Panc1 (cell line): ENCODE measurements at regions of chr17 and their contacts with region 1.

Region 1: GRCh38 chr17:48636177-48637018 is 10.2 kb upstream of the HOXB9 start:
- DNase-seq: no peak
- ATAC-seq: peak; percentile 54
- H3K4me3 ChIP-seq: no peak overlapping the region
- H3K27ac ChIP-seq: no peak overlapping the region; the same call in 1 of the 2 replicates
- H3K4me1 ChIP-seq: peaks cover 33% of the 10 kb centered on the region
- H3K27me3 ChIP-seq: no peaks in the 10 kb centered on the region
- CTCF ChIP-seq: peak; percentile 93; the same call in 1 of the 2 replicates

Region 2: DNA sequence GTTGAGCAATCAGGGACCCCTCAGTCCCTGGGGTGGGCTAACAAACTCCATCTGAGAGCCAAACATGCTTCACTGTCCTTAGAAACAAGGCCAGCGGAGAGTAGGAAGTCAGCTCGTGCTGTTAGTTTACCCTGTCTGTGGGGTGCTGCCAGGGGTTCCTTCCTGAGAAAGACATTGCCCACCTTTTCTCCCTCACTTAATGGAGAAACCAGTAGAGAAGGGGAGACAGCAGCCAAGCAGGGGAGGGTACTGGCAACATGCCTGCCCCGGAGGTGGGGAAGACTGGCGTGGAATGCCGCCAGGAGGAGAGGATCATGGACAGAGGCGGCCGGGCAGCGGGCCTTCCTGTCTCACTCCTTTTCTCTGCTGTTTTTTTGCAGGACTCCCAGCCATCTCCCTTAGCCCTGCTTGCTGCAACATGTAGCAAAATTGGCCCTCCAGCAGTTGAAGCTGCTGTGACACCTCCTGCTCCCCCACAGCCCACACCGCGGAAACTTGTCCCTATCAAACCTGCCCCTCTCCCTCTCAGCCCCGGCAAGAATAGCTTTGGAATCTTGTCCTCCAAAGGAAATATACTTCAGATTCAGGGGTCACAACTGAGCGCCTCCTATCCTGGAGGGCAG is 720.5 kb before region 1 on chr17:
- CTCF ChIA-PET with region 1: interaction called, 10 read pairs
- POLR2A ChIA-PET with region 1: no interaction called
- in situ Hi-C with region 1: no loop called
- intact Hi-C with region 1: no loop called
- DNase-seq: no peak
- ATAC-seq: 0 out of 2 replicates have a peak, but pooled peaks have one; percentile 13
- H3K4me3 ChIP-seq: no peak overlapping the region
- H3K27ac ChIP-seq: no peak overlapping the region
- H3K4me1 ChIP-seq: no peaks in the 10 kb centered on the region; the same call in 1 of the 2 replicates
- H3K27me3 ChIP-seq: no peaks in the 10 kb centered on the region
- CTCF ChIP-seq: no peak

Region 3: DNA sequence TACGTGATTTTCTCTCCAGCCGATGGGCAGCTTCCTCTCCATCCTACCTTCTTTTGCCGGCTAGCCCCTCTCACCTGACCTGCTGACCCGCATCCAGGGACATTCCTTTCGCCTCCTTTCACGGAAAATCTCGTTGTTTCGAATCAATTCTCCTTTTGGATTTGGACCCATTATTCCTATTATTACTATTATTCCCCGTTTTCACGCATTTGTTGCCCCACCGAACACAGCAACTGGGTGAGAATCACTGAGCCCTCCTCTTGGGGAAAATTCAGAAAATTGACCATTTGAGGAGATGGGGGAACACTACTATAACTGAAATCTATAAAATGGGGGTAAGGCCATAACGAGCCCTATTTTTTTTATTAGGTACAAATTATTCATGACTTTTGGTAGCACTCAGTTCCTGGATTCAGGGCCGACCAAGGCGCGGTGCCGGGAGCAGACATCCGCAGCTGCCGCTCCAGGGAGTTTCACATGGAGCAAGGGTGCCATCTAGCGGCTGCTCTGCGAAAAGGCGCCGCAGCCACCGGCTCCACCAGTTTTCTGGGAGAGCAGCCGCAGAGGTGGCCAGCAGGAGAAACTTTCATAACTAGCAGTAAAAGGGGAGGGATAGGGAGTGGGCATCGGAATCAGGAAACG is 18.0 kb before region 1 on chr17:
- CTCF ChIA-PET with region 1: interaction called, 4 read pairs
- POLR2A ChIA-PET with region 1: interaction called, 26 read pairs
- in situ Hi-C with region 1: no loop called
- intact Hi-C with region 1: no loop called
- DNase-seq: no peak
- ATAC-seq: peak; percentile 60
- H3K4me3 ChIP-seq: peak overlapping the region; percentile 68 to 71
- H3K27ac ChIP-seq: peak overlapping the region; percentile 99
- H3K4me1 ChIP-seq: peaks cover 63% of the 10 kb centered on the region
- H3K27me3 ChIP-seq: no peaks in the 10 kb centered on the region
- CTCF ChIP-seq: peak; percentile 100

Region 4: GRCh38 chr17:48625495-48626244 is 10.7 kb before region 1 on chr17:
- CTCF ChIA-PET with region 1: interaction called, 4 read pairs
- POLR2A ChIA-PET with region 1: interaction called, 27 read pairs
- in situ Hi-C with region 1: no loop called
- intact Hi-C with region 1: no loop called
- DNase-seq: no peak
- ATAC-seq: peak; percentile 73
- H3K4me3 ChIP-seq: peak overlapping the region; percentile 78 to 93
- H3K27ac ChIP-seq: peak overlapping the region; percentile 95
- H3K4me1 ChIP-seq: peaks cover 60% of the 10 kb centered on the region
- H3K27me3 ChIP-seq: no peaks in the 10 kb centered on the region
- CTCF ChIP-seq: no peak

Region 5: DNA sequence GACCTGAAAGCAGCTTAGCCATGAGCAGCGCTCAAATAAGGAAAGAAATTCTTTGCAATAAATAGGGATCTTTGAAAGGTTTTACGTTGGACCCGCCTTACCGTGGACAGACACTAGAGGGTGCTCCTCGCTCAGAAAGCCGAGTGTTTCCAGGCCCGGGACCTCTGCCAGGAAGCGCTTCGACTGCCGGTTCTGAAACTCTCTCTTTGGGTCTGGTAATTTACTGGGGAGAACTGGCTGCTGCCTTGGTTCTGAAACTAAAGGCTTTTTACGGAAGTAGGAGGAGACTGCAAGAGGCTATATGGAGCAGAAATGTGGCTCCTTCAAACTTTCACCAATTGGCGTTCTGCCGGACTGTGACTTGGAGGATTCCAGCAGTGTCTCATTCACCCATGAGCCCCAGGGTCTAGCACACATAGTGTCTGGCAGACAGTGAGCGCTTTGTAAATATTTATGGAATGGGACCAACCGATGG is 35.3 kb after region 1 on chr17:
- CTCF ChIA-PET with region 1: no interaction called
- POLR2A ChIA-PET with region 1: no interaction called
- in situ Hi-C with region 1: no loop called
- intact Hi-C with region 1: no loop called
- DNase-seq: peak; percentile 25
- ATAC-seq: peak; percentile 88
- H3K4me3 ChIP-seq: peak overlapping the region in 1 of 2 experiments; percentile 36; a peak in 2 of 4 replicates
- H3K27ac ChIP-seq: peak overlapping the region; percentile 17; the same call in 1 of the 2 replicates
- H3K4me1 ChIP-seq: peaks cover 5% of the 10 kb centered on the region
- H3K27me3 ChIP-seq: no peaks in the 10 kb centered on the region
- CTCF ChIP-seq: peak; percentile 99

Region 6: DNA sequence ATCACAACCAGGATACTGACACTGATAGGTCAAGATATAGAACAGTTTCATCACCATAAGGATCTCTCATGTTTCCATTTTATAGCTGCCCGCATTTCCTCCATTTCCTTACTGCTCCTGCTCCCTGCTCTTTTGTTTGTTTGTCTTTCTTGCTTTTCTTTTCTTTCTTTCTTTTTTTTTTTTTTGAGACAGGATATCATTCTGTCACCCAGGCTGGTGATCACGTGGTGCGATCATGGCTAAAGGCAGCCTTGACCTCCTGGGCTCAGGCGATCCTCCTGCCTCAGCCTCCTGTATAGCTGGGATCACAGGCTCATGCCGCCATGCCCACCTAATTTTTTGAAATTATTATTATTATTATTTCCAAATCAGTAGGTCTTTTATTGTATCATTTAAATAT is 54.3 kb after region 1 on chr17:
- CTCF ChIA-PET with region 1: no interaction called
- POLR2A ChIA-PET with region 1: no interaction called
- in situ Hi-C with region 1: no loop called
- intact Hi-C with region 1: no loop called
- DNase-seq: no peak
- ATAC-seq: no peak
- H3K4me3 ChIP-seq: no peak overlapping the region
- H3K27ac ChIP-seq: no peak overlapping the region
- H3K4me1 ChIP-seq: no peaks in the 10 kb centered on the region
- H3K27me3 ChIP-seq: no peaks in the 10 kb centered on the region
- CTCF ChIP-seq: no peak

Region 7: GRCh38 chr17:48791128-48792032 is 155.0 kb after region 1 on chr17:
- CTCF ChIA-PET with region 1: interaction called, 11 read pairs
- POLR2A ChIA-PET with region 1: no interaction called
- in situ Hi-C with region 1: no loop called
- intact Hi-C with region 1: no loop called
- DNase-seq: peak; percentile 75
- ATAC-seq: peak; percentile 95
- H3K4me3 ChIP-seq: peak overlapping the region; percentile 7 to 23; a peak in 3 of 4 replicates
- H3K27ac ChIP-seq: peak overlapping the region; percentile 73
- H3K4me1 ChIP-seq: peaks cover 23% of the 10 kb centered on the region
- H3K27me3 ChIP-seq: no peaks in the 10 kb centered on the region
- CTCF ChIP-seq: peak; percentile 96